HEK293T (cell line): ENCODE measurements at regions of chr2 and their contacts with region 1.

Region 1: DNA sequence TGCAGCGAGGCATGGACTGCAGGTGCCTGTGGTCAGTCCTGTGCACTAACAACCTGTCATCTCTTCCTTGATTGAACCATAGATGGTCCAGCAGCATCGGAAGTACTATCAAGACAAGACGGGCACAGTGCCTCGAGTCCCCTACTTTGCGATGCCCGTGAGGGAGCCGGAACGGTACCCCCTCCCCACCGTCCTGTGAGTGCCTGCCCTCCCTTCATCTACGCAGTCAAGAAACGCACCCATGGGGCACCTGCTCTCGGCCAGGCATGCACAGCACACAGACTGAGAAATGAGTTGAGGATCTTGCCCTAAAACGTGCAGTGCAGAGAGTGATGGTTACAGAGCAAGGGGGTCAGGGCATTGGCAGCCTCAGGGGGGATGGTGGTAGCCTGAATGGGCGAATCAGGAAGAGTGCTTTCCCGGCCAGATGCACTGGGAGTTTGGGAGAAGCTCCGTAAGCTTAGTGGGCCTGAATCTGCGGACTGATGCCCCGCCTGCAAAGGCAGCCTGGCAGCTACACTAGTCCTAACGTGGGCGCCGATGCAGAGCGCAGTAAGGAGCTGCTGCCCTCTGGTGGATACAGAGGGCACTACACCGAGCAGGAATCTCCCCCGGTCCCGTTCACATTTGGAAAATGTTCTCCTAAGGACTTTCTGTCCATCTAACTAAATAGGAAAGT is 63.6 kb downstream of the CIB4 start:
- DNase-seq: peak; percentile 87

Region 2: GRCh38 chr2:26376799-26377198 is 200.8 kb before region 1 on chr2:
- CTCF ChIA-PET with region 1: no interaction called
- POLR2A ChIA-PET with region 1: no interaction called
- DNase-seq: no peak

Region 3: DNA sequence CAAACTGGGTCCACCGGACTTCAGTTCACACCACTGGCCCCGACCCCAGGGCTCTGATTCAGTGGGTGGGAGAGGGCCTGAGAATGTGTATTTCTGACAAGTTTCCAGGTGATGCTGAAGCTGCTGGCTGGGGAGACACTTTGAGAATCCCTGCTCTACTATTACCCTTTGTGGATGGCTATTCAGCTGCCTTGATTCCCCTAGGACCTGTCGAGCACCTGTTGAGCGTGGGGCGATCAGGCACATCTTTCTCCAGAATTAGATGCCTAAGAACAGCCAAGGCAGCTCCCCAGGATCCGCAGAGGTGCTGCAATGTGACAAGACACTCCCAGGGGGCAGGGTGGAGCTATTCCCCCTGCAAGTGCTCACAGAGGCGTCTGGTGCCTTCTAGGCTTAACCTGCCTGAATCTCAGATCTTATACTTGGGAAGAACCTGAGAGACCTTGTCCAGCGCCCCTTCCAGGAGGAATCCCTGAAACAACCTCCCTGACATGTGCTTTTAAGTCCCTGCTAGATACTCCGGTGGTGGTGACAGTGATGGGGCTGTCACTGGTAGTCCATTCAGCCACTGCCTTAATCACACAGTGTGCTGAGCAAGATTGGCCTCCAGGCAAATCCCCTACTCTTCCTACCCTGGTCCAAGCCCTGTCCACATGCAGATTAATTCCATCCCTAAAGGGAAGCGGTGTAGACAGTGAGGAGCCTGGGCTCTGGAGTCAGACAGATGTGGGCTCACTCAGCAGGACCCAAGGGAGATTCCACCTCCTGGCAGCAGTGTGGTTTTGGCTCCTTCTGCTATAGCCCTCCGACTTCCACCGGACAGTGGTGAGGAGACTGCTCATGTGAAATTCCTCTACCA is 56.3 kb before region 1 on chr2:
- CTCF ChIA-PET with region 1: interaction called, 12 read pairs
- POLR2A ChIA-PET with region 1: interaction called, 3 read pairs
- DNase-seq: peak; percentile 61

Region 4: DNA sequence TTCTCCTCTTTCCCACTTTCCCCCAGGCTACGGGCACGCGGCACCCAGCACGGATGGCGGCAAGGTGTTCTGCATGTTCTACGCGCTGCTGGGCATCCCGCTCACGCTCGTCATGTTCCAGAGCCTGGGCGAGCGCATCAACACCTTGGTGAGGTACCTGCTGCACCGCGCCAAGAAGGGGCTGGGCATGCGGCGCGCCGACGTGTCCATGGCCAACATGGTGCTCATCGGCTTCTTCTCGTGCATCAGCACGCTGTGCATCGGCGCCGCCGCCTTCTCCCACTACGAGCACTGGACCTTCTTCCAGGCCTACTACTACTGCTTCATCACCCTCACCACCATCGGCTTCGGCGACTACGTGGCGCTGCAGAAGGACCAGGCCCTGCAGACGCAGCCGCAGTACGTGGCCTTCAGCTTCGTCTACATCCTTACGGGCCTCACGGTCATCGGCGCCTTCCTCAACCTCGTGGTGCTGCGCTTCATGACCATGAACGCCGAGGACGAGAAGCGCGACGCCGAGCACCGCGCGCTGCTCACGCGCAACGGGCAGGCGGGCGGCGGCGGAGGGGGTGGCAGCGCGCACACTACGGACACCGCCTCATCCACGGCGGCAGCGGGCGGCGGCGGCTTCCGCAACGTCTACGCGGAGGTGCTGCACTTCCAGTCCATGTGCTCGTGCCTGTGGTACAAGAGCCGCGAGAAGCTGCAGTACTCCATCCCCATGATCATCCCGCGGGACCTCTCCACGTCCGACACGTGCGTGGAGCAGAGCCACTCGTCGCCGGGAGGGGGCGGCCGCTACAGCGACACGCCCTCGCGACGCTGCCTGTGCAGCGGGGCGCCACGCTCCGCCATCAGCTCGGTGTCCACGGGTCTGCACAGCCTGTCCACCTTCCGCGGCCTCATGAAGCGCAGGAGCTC is 150.3 kb after region 1 on chr2:
- CTCF ChIA-PET with region 1: no interaction called
- POLR2A ChIA-PET with region 1: no interaction called
- DNase-seq: no peak